Adrenal gland (tissue), 19 donors: ENCODE measurements at regions of chr19 and their contacts with region 1.

Region 1: GRCh38 chr19:38634757-38635482 is 12.5 kb upstream of the ACTN4 start:
- DNase-seq: peak; percentile 57 to 88 (median 76)
- H3K4me3 ChIP-seq: no peak overlapping the region
- H3K27ac ChIP-seq: peak overlapping the region in 2 of 5 donors; percentile 32 to 40
- H3K4me1 ChIP-seq: peaks cover 0 to 5% of the 10 kb centered on the region in 2 donors
- H3K27me3 ChIP-seq: no peaks in the 10 kb centered on the region
- CTCF ChIP-seq: peak; percentile 88 to 93 (median 90)
- POLR2A ChIP-seq: no peak

Region 2: DNA sequence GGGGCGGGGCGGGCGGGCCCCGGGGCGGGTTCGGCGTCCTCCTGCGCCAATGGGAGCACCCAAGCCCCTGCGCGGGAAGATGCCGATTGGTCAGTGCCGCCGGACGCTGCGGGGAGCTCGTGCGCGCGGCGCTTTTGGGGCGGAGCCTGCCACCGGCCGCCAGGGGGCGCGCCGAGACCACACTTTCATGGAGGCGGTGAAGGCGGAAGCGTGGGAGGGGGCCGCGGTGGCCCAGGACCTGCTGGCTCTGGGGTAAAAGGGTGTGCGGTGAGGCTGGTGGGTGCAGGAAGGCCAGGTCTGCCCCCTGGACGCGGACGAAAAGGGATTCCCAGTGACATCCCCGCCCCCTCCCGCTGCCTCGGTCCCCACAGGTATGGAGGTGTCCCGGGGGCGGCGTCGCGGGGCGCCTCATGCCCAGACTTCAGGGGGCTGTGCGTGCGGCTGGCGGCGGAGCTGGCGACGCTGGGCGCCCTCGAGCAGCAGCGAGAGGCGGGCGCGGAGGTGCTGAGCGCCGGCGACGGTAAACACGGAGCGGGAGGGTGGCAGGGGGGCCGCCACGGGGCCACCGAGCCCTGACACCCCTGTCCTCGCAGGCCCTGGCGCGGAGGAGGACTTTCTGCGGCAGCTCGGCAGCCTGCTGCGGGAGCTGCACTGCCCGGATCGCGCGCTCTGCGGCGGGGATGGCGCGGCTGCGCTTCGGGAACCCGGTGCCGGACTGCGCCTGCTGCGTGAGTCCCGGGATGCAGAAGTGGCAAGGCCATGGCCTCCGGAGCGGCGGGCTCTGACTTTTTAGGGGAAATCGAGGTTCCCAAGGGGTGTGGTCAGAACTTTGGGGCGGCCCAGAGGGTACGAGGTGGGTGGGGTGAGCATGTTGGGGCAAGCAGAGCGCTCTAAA is 231.7 kb before region 1 on chr19 and contains the start of gene FAM98C:
- intact Hi-C with region 1: loop called (anchors 5 to 10 kb)
- DNase-seq: peak; percentile 95 to 98 (median 97)
- H3K4me3 ChIP-seq: peak within 1 kb of the TSS; percentile 41 to 84 (median 60)
- H3K27ac ChIP-seq: peak within 1 kb of the TSS in 3 of 5 donors; percentile 37 to 75 (median 72)
- H3K4me1 ChIP-seq: peaks cover 0 to 7% of the 10 kb centered on the region in 2 donors
- H3K27me3 ChIP-seq: peaks cover 11% of the 10 kb centered on the region
- CTCF ChIP-seq: peak; percentile 88 to 99 (median 96)
- POLR2A ChIP-seq: peak in 1 of 2 donors; percentile 28
- total RNA-seq, gene FAM98C: 7.2 to 33.5 (median 16.6) TPM

Region 3: DNA sequence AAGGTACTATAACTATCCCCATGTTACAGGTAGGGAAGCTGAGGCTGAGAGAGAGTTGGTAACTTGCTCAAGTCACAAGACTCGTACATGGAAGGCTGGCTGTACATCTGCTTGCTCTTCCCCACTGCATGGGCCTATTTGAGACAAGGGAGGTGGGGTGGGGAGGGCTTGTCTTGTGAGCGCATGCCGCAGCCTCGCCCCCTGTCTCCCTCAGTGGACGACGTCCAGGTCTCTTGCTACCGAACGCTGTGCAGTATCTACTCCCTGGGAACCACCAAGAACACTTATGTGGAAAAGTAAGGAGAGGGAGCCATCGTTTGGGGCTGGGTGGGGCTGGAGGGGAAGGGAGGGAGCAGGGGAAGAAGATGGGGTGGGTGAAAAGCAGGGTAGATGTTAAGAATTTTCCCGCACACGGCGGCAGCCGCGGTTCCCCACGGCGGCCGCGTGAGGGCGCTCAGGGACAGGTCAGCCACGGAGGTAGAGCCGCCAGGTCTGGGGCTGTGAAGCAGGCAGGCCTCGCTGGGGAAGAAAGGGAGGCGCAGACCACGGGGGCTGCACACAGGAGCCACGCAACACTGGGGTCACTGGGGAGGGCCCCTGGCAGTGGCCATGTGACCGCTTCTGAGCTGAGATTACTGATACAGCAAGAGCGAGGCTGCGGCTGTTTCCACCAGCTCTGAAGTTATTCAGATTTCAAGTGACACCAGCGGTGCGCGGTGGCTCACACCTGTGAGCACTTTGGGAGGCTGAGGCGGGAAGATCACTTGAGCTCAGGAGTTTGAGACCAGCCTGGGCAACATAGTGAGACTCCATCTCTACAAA is 119.9 kb before region 1 on chr19:
- intact Hi-C with region 1: loop called (anchors 5 kb)
- DNase-seq: peak; percentile 49 to 77 (median 69)
- H3K4me3 ChIP-seq: no peak overlapping the region
- H3K27ac ChIP-seq: no peak overlapping the region
- H3K4me1 ChIP-seq: no peaks in the 10 kb centered on the region
- H3K27me3 ChIP-seq: no peaks in the 10 kb centered on the region
- CTCF ChIP-seq: peak; percentile 66 to 86 (median 76)
- POLR2A ChIP-seq: no peak

Region 4: DNA sequence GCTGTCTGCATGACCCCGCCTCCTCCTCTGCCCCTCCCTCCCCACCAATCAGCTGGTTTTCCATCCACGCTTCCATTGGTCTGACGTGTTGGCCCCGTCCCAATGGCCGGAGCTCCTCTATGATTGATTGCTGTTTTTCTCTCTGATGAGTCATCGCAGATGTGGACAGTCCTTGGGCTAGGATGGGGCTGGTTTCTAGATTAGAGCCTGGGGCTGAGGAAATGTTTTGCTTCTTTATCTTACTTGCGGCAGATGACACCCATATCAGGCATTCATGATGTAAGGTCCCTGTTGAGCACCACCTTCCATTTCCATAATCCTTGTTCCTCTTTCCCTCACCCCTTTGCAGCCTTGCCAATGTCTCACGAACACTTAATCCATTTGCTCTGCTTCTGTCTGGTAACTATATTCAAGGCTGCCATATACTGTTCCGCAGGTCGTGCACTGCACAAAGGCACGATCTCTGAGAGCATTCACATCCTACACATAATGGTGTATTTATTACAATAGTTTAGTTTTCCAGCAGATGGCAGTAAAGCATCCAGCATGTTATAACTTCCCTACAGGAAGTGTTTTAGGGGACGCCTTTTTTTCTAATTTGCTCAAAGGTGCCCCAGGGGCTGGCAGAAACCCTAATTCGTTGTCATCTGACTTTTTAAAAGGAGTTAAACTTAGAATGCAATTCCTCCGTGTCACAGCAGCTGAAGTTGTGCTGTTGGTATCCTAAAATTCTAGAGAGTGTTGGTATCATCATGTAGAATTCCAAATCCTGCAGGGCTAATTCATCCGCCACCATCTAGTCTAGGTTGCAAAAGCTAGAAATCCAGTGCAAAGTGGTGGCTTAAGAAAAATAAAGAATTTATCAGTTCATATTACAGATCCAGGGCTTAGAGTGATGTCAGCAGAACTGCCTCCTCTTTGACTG is 90.6 kb before region 1 on chr19:
- intact Hi-C with region 1: loop called in 1 of 2 experiments (anchors 10 kb)
- DNase-seq: peak; percentile 83 to 95 (median 93)
- H3K4me3 ChIP-seq: peak overlapping the region in 1 of 4 donors; percentile 2
- H3K27ac ChIP-seq: peak overlapping the region in 4 of 5 donors; percentile 12 to 85 (median 58)
- H3K4me1 ChIP-seq: peaks cover 7 to 11% of the 10 kb centered on the region in 2 donors
- H3K27me3 ChIP-seq: no peaks in the 10 kb centered on the region
- CTCF ChIP-seq: peak; percentile 39 to 74 (median 59)
- POLR2A ChIP-seq: no peak

Region 5: GRCh38 chr19:38917516-38918491 is 282.9 kb after region 1 on chr19:
- intact Hi-C with region 1: loop called in 1 of 2 experiments (anchors 10 kb)
- DNase-seq: peak in 6 of 7 donors; percentile 41 to 66 (median 54)
- H3K4me3 ChIP-seq: no peak overlapping the region
- H3K27ac ChIP-seq: no peak overlapping the region
- H3K4me1 ChIP-seq: peaks cover 0 to 3% of the 10 kb centered on the region in 2 donors
- H3K27me3 ChIP-seq: no peaks in the 10 kb centered on the region
- CTCF ChIP-seq: peak in 4 of 6 experiments; percentile 9 to 25 (median 18)
- POLR2A ChIP-seq: no peak